ENCODE measurements at regions of chr7 and their contacts with region 1.

Region 1: DNA sequence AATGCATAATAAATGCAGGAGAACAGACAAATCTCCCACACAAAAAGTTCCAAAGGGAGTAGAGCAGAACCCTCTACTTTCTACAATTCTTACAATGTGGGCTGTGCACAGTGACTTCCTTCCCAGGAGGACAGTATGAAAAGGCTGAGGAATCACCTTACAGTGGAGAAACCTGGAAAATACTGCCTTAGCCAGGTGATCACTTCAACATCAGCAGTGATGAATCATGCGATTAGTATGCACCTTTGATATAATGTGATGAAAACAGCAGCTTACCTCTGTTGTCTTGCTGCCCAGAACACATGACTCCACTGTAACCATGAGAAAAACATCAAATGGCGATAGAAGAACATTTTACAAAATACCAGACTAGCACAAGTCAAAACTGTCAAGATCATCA is 329.7 kb upstream of the POM121L12 start:
- DNase-seq: no peak
- ATAC-seq: no peak
- H3K4me3 ChIP-seq: no peak overlapping the region
- H3K27ac ChIP-seq: no peak overlapping the region
- H3K4me1 ChIP-seq: no peaks in the 10 kb centered on the region
- H3K27me3 ChIP-seq: no peaks in the 10 kb centered on the region
- CTCF ChIP-seq: no peak
- EP300 ChIP-seq: no peak
- POLR2A ChIP-seq: no peak
- RAD21 ChIP-seq: no peak

Region 2: DNA sequence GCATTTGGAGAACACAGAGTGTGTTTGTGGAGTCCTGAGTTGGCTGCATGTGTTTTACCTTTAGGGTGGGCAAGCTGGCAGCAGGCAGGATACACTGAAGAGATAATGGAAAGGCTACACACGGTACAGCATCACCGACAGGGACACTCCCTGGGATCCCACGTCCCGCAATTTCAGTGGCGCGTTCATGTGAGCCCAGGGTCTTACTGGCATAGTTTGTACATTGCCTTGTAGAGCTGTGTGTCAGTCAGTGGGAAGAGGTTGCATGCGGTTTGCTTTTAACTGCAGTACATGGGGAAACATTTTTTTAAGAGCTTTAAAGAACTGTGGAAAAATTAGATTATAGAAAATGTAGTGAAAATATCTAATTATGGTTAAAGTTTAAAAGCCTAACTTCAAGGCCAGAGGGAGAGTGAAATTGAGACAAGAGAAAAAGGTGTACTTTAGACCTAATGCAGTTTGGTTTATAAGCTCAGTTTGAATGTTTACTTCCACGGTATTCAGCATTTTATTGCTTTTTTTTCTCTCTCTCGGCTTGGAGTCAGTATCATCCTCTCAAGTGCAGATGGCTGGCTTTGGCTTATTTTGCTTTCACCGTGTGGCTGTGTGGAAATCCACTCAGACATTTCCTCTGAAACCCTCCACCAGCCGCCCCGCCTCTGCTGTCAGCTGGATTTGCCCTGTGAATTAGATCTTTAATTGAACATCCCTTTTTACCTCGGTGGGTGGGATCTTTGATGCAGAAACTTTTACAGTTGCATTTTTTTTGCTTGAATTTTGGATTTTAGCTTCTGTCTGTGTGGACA is 1025.0 kb before region 1 on chr7:
- CTCF ChIA-PET with region 1: no interaction called
- POLR2A ChIA-PET with region 1: no interaction called
- in situ Hi-C with region 1: no loop called
- intact Hi-C with region 1: loop called (anchors 5 kb)
- DNase-seq: no peak
- ATAC-seq: peak; percentile 55; the same call in 2 of the 3 replicates
- H3K4me3 ChIP-seq: no peak overlapping the region
- H3K27ac ChIP-seq: no peak overlapping the region
- H3K4me1 ChIP-seq: peaks cover 9% of the 10 kb centered on the region; the same call in 1 of the 2 replicates
- H3K27me3 ChIP-seq: no peaks in the 10 kb centered on the region
- CTCF ChIP-seq: no peak
- EP300 ChIP-seq: no peak
- POLR2A ChIP-seq: no peak
- RAD21 ChIP-seq: no peak

Measured in HepG2 (cell line).